Vagina (tissue), 2 donors: ENCODE measurements at regions of chr16 and their contacts with region 1.

Region 1: GRCh38 chr16:79876332-79876730 is 275.8 kb upstream of the MAF start:
- DNase-seq: no peak
- H3K4me3 ChIP-seq: no peak overlapping the region
- H3K27ac ChIP-seq: no peak overlapping the region
- H3K4me1 ChIP-seq: peaks cover 5% of the 10 kb centered on the region
- H3K27me3 ChIP-seq: no peaks in the 10 kb centered on the region
- CTCF ChIP-seq: no peak
- POLR2A ChIP-seq: no peak

Region 2: DNA sequence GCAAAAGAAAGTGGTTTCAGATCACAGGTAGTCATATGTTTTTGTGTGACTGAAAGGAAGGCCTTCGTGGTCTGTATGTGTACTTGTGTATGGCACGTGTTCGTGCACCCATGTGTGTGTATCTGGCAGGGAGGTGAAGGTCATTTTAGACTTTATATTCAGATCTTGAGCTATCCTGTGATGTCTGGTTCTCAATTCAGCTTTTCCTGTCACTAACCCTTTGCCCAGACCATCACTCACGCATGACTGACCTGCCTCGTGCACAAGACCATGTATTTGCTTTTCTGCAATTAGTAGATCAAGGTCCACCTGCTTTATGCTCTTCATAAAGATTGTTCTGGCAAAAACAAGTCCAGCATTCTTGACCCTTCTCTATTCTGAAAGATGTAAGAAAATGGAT is 136.1 kb before region 1 on chr16:
- intact Hi-C with region 1: no loop called
- DNase-seq: no peak
- H3K4me3 ChIP-seq: no peak overlapping the region
- H3K27ac ChIP-seq: no peak overlapping the region
- H3K4me1 ChIP-seq: no peaks in the 10 kb centered on the region
- H3K27me3 ChIP-seq: no peaks in the 10 kb centered on the region
- CTCF ChIP-seq: no peak
- POLR2A ChIP-seq: no peak

Region 3: DNA sequence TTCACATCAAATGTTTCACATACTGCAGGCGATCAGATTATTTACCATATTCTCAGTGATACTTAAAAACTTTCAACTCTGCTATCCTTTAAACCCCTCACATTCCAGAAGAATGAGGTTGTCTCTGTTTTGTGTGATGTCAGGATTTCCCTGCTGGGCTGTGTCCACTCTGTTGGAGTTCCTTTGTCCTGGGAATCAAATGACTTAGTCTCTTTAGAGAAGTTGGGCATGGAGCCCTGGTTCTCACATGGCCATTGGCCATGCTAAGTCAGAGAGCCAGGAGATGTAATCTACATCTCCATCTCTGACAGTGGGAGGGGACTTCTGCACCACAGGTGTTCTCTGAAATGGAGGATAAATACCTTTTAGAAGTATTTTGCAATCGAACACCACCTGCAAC is 70.7 kb before region 1 on chr16:
- intact Hi-C with region 1: loop called (anchors 10 kb)
- DNase-seq: no peak
- H3K4me3 ChIP-seq: no peak overlapping the region
- H3K27ac ChIP-seq: no peak overlapping the region
- H3K4me1 ChIP-seq: peaks cover 27% of the 10 kb centered on the region
- H3K27me3 ChIP-seq: no peaks in the 10 kb centered on the region
- CTCF ChIP-seq: no peak
- POLR2A ChIP-seq: no peak